Endothelial cell of umbilical vein (primary cell): ENCODE measurements at regions of chr1 and their contacts with region 1.

Region 1: GRCh38 chr1:235971571-235972310 is 93.1 kb downstream of the NID1 start:
- DNase-seq: peak; percentile 94
- H3K4me3 ChIP-seq: no peak overlapping the region
- H3K27ac ChIP-seq: peak overlapping the region; percentile 64
- H3K4me1 ChIP-seq: peaks cover 22% of the 10 kb centered on the region
- H3K27me3 ChIP-seq: peaks cover 0 to 1% of the 10 kb centered on the region in 2 experiments
- CTCF ChIP-seq: peak; percentile 85 to 89
- POLR2A ChIP-seq: no peak

Region 2: GRCh38 chr1:235597867-235598553 is 373.7 kb before region 1 on chr1:
- CTCF ChIA-PET with region 1: interaction called, 59 read pairs
- POLR2A ChIA-PET with region 1: no interaction called
- dilution Hi-C with region 1: no loop called
- intact Hi-C with region 1: loop called (anchors 1 kb)
- DNase-seq: peak; percentile 18
- H3K4me3 ChIP-seq: no peak overlapping the region
- H3K27ac ChIP-seq: no peak overlapping the region
- H3K4me1 ChIP-seq: no peaks in the 10 kb centered on the region
- H3K27me3 ChIP-seq: no peaks in the 10 kb centered on the region
- CTCF ChIP-seq: peak; percentile 28 to 36
- POLR2A ChIP-seq: no peak

Region 3: GRCh38 chr1:235624721-235625333 is 346.9 kb before region 1 on chr1:
- CTCF ChIA-PET with region 1: no interaction called
- POLR2A ChIA-PET with region 1: no interaction called
- dilution Hi-C with region 1: no loop called
- intact Hi-C with region 1: no loop called
- DNase-seq: peak; percentile 73
- H3K4me3 ChIP-seq: no peak overlapping the region
- H3K27ac ChIP-seq: no peak overlapping the region
- H3K4me1 ChIP-seq: no peaks in the 10 kb centered on the region
- H3K27me3 ChIP-seq: peaks cover 4 to 9% of the 10 kb centered on the region in 2 experiments
- CTCF ChIP-seq: no peak
- POLR2A ChIP-seq: no peak

Region 4: GRCh38 chr1:235791532-235792060 is 180.1 kb before region 1 on chr1:
- CTCF ChIA-PET with region 1: interaction called, 21 read pairs
- POLR2A ChIA-PET with region 1: no interaction called
- dilution Hi-C with region 1: no loop called
- intact Hi-C with region 1: no loop called
- DNase-seq: no peak
- H3K4me3 ChIP-seq: no peak overlapping the region
- H3K27ac ChIP-seq: no peak overlapping the region
- H3K4me1 ChIP-seq: no peaks in the 10 kb centered on the region
- H3K27me3 ChIP-seq: no peaks in the 10 kb centered on the region
- CTCF ChIP-seq: no peak
- POLR2A ChIP-seq: no peak

Region 5: DNA sequence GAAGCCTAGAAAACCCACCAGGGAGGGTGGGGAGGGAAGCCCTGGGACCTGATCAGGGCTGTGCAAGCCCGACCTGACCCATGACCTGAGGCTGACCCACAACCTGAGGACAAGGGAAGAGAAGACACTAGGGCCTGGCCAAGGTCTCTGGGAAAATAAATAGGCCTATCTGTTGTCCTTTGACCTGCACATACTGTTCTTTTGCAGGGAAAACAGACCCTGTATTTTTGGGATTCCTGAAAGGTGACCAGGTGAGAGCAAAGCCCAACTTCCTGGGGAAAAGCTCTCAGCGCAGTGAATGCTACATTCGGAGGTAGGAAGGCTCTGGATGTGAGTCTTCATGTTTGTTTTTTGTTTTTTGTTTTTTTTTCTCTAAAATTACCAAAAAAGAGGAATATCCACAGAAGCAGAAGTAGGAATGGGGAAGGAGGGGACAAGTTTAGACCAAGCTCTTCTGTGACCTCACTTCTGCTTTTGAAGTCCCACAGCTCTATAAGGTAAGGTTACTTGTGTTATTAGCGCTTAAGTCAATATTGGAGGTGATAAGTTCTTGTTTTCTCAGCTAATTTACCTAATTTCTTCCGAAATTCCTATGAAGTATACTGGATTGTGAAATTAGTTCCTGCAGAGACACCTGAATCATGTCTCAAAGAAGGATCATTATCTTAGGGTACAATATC is 78.9 kb before region 1 on chr1:
- CTCF ChIA-PET with region 1: interaction called, 18 read pairs
- POLR2A ChIA-PET with region 1: no interaction called
- dilution Hi-C with region 1: no loop called
- intact Hi-C with region 1: no loop called
- DNase-seq: no peak
- H3K4me3 ChIP-seq: no peak overlapping the region
- H3K27ac ChIP-seq: no peak overlapping the region
- H3K4me1 ChIP-seq: no peaks in the 10 kb centered on the region
- H3K27me3 ChIP-seq: no peaks in the 10 kb centered on the region
- CTCF ChIP-seq: no peak
- POLR2A ChIP-seq: no peak

Region 6: GRCh38 chr1:235933017-235933765 is 38.5 kb before region 1 on chr1:
- CTCF ChIA-PET with region 1: interaction called, 22 read pairs
- POLR2A ChIA-PET with region 1: no interaction called
- dilution Hi-C with region 1: no loop called
- intact Hi-C with region 1: no loop called
- DNase-seq: peak; percentile 25
- H3K4me3 ChIP-seq: no peak overlapping the region
- H3K27ac ChIP-seq: no peak overlapping the region
- H3K4me1 ChIP-seq: peaks cover 8% of the 10 kb centered on the region
- H3K27me3 ChIP-seq: no peaks in the 10 kb centered on the region
- CTCF ChIP-seq: no peak
- POLR2A ChIP-seq: no peak

Region 7: GRCh38 chr1:235999259-235999925 is 27.7 kb after region 1 on chr1:
- CTCF ChIA-PET with region 1: interaction called, 21 read pairs
- POLR2A ChIA-PET with region 1: no interaction called
- dilution Hi-C with region 1: no loop called
- intact Hi-C with region 1: loop called (anchors 1 kb)
- DNase-seq: peak; percentile 95
- H3K4me3 ChIP-seq: no peak overlapping the region
- H3K27ac ChIP-seq: peak overlapping the region; percentile 89
- H3K4me1 ChIP-seq: peaks cover 38% of the 10 kb centered on the region
- H3K27me3 ChIP-seq: no peaks in the 10 kb centered on the region
- CTCF ChIP-seq: no peak
- POLR2A ChIP-seq: peak; percentile 40